Heart left ventricle (tissue), 16 donors: ENCODE measurements at regions of chr1 and their contacts with region 1.

Region 1: DNA sequence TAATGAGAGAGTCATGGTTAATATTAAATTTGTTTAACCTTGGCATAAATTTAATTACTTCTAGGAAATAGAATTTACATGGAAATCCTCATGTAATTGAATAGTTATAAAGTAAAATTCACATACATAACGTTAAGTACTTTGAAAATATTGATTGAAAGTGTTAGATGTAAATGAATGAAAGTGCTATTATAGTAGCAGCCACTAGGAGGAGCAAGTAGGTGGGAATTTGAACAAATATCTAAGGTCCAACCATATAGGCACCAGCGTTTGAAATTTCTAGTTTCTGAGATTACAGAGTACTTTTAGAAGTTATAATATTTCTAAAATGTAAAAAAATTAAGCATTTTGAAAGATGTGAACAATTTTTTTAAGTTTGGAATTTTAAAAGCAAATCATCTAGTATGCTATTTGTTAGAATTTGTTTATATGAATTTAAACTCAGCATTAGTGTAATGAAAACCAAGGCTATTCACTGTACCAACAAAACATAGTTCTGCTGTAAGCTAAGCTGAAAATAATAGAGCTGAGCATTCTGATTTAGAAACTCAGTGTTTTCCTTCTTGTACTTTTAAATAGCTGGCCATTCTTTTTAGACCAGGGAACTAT is 3.3 kb downstream of the B3GALT2 start:
- DNase-seq: no peak
- ATAC-seq: peak in 2 of 4 donors; percentile 45 to 49
- H3K4me3 ChIP-seq: peak overlapping the region in 11 of 12 donors; percentile 16 to 58 (median 51)
- H3K27ac ChIP-seq: peak overlapping the region in 9 of 12 donors; percentile 11 to 78 (median 75)
- H3K4me1 ChIP-seq: peaks cover 0 to 68% (median 29%) of the 10 kb centered on the region in 12 donors
- H3K27me3 ChIP-seq: no peaks in the 10 kb centered on the region
- CTCF ChIP-seq: peak; percentile 76 to 90 (median 86)
- POLR2A ChIP-seq: no peak

Region 2: GRCh38 chr1:193338194-193338593 is 155.1 kb after region 1 on chr1:
- intact Hi-C with region 1: loop called in 1 of 10 experiments (anchors 10 kb)
- DNase-seq: no peak
- ATAC-seq: peak in 1 of 4 donors; percentile 49
- H3K4me3 ChIP-seq: no peak overlapping the region
- H3K27ac ChIP-seq: no peak overlapping the region
- H3K4me1 ChIP-seq: peaks cover 0 to 4% (median 0%) of the 10 kb centered on the region in 12 donors
- H3K27me3 ChIP-seq: no peaks in the 10 kb centered on the region
- CTCF ChIP-seq: peak in 1 of 12 donors; percentile 9
- POLR2A ChIP-seq: no peak

Region 3: GRCh38 chr1:193406901-193407300 is 223.8 kb after region 1 on chr1:
- intact Hi-C with region 1: loop called in 8 of 10 experiments (anchors 5 to 10 kb)
- DNase-seq: no peak
- ATAC-seq: peak in 1 of 4 donors; percentile 31
- H3K4me3 ChIP-seq: no peak overlapping the region
- H3K27ac ChIP-seq: peak overlapping the region in 3 of 12 donors; percentile 0 to 26 (median 13)
- H3K4me1 ChIP-seq: peaks cover 0 to 28% (median 8%) of the 10 kb centered on the region in 12 donors
- H3K27me3 ChIP-seq: no peaks in the 10 kb centered on the region
- CTCF ChIP-seq: peak; percentile 50 to 81 (median 73)
- POLR2A ChIP-seq: no peak

Region 4: DNA sequence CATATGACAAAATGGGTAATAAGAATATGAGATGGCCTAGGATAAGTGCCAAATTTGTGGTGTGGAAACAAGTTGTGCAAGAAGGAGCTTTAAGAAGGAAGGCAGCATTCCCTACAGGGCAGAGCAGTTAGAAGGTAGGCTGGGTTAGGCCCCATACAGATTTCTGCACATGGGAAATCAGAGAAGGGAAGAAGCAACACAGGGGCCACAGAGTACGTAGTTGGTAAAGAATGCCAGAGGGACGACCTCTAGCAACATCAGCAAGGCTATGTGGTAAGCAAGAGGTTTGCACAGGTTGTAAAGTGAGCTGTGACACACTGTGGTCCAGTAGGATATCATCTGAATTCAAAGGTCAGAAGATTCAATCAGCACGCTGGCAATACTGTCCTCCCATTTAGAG is 768.9 kb after region 1 on chr1:
- intact Hi-C with region 1: loop called in 2 of 10 experiments (anchors 5 to 10 kb)
- DNase-seq: no peak
- ATAC-seq: peak in 3 of 4 donors; percentile 45 to 46 (median 45)
- H3K4me3 ChIP-seq: no peak overlapping the region
- H3K27ac ChIP-seq: peak overlapping the region in 11 of 12 donors; percentile 12 to 70 (median 35)
- H3K4me1 ChIP-seq: peaks cover 0 to 5% (median 0%) of the 10 kb centered on the region in 12 donors
- H3K27me3 ChIP-seq: no peaks in the 10 kb centered on the region
- CTCF ChIP-seq: no peak
- POLR2A ChIP-seq: no peak

Region 5: DNA sequence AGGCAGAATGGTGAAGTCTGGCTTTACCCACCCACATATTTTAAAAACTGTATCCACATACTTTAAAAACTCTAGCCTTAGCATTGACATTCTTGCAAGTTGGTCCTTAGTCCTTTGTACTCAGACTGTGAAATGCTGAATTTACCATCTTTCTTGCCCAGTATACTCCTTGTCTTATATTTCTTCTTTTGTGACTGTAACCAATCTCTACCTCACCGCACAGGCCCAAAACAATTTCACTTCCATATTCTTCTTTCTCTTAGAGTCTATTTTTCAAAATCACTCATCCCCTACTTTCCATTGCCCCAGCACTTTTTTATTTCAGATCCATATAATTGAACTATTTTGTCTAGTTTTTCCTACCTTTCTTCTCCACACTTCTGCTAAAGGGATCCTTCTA is 895.6 kb after region 1 on chr1:
- intact Hi-C with region 1: loop called in 2 of 10 experiments (anchors 10 kb)
- DNase-seq: no peak
- ATAC-seq: no peak
- H3K4me3 ChIP-seq: no peak overlapping the region
- H3K27ac ChIP-seq: no peak overlapping the region
- H3K4me1 ChIP-seq: no peaks in the 10 kb centered on the region
- H3K27me3 ChIP-seq: no peaks in the 10 kb centered on the region
- CTCF ChIP-seq: no peak
- POLR2A ChIP-seq: no peak